ENCODE measurements at regions of chr19 and their contacts with region 1.

Region 1: DNA sequence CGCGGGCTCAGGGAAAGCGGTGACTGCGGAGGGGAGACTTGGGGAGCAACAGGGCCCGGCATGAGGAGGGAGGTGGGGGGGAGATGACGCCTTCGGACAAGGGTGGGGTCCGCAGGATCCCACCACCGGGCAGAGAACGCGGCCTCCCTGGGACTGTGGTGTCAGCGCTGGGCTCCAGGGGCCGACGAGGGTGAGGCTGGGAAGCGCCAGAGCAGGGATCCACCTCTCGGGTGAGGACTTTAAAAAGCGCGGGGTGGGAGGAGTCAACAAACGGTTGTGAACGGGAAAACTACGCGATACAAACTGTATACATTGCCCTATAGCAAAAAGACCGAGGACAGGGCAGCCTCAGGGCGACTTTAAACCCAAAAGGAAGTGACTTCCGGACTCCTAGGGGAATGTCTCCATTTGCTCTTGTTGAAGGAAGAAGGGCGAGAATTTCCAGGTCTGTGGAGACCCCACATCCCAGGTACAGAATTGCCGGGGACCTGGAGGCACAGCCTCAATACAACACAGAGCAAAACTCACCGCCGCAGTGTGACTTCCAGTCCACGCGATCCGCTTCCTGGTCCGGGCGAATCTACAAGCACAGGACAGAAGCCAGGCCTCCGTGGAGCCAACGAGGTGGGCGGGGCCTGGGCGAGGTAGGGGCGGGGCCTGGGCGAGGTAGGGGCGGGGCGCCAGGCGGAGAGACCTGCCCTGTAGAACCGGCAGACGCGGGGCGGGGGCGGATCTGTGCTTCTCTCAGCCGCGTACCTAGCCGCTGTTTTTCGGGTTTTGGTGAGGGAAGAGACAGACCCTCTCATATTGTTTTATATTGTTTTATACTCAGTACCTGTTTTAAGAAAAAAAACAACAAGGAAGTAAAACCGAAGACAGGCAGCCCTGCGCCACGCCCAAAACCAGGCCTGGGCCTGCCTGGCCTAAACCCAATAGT is at the start of gene ZNF888:
- DNase-seq: peak; percentile 96
- ATAC-seq: peak; percentile 100
- H3K4me3 Mint-ChIP-seq: peak within 1 kb of the TSS; percentile 89
- H3K27ac Mint-ChIP-seq: peak within 1 kb of the TSS; percentile 94
- H3K4me1 Mint-ChIP-seq: peaks cover 23% of the 10 kb centered on the region
- H3K27me3 Mint-ChIP-seq: no peaks in the 10 kb centered on the region
- total RNA-seq, gene ZNF888: 5.1 to 5.5 TPM

Region 2: GRCh38 chr19:52248241-52248640 is 674.9 kb before region 1 on chr19:
- CTCF ChIA-PET with region 1: no interaction called
- POLR2A ChIA-PET with region 1: no interaction called
- intact Hi-C with region 1: loop called in 1 of 2 experiments (anchors 5 kb)
- DNase-seq: peak; percentile 82
- ATAC-seq: peak; percentile 93
- H3K4me3 Mint-ChIP-seq: no peak overlapping the region
- H3K27ac Mint-ChIP-seq: no peak overlapping the region
- H3K4me1 Mint-ChIP-seq: no peaks in the 10 kb centered on the region
- H3K27me3 Mint-ChIP-seq: no peaks in the 10 kb centered on the region

Region 3: DNA sequence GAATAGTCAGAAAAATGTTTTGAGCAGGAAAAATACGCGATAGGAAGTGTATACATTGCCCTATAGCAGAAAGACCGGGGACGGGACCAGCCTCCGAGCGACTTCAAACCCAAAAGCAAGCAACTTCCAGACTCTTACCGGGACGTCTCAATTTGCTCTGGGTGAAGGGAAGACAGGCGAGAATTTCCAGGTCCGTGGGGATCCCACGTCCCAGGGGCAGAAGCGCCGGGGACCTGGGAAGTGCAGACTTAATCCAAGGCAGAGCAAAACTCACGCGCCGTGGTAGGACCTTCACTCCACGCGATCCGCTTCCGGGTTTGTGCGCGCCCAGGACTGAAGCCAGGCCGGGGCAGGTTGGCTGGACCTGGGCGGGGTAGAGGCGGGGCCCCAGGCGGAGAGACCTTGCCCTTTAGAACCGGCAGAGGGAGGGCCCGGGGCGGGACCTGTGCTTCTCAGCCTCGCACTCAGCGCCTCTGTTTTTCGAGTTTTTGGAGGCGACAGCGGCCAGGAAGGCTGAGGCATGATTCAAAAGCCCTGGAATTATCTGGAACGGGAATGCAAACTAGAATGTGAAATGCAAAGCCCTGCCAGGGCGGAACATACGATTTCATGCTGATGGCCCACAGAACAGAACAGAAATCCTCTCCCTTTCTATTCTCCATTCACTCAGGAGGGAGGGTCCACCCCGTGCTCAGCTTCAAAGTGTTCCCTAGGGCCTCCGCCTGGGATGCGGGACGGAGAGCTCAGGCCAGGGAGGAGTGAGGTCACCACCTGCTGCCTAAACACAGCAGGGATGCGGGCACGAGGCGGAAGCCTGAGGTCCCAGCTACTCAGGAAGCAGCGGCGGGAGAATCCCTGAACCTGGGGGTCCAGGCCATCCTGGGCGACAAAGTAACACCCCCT is 136.4 kb before region 1 on chr19 and contains the start of gene ZNF600:
- CTCF ChIA-PET with region 1: no interaction called
- POLR2A ChIA-PET with region 1: no interaction called
- intact Hi-C with region 1: loop called in 1 of 2 experiments (anchors 5 kb)
- DNase-seq: peak; percentile 83
- ATAC-seq: peak; percentile 99
- H3K4me3 Mint-ChIP-seq: peak within 1 kb of the TSS; percentile 87
- H3K27ac Mint-ChIP-seq: peak within 1 kb of the TSS; percentile 84
- H3K4me1 Mint-ChIP-seq: peaks cover 23% of the 10 kb centered on the region
- H3K27me3 Mint-ChIP-seq: no peaks in the 10 kb centered on the region
- total RNA-seq, gene ZNF600: 10.6 to 14.3 TPM

Region 4: GRCh38 chr19:52897144-52897935 is 25.8 kb before region 1 on chr19 and contains the start of gene ZNF320:
- CTCF ChIA-PET with region 1: interaction called, 4 read pairs
- POLR2A ChIA-PET with region 1: no interaction called
- intact Hi-C with region 1: loop called (anchors 1 to 2 kb)
- DNase-seq: peak; percentile 98
- ATAC-seq: peak; percentile 100
- H3K4me3 Mint-ChIP-seq: peak within 1 kb of the TSS; percentile 88
- H3K27ac Mint-ChIP-seq: peak within 1 kb of the TSS; percentile 93
- H3K4me1 Mint-ChIP-seq: peaks cover 31% of the 10 kb centered on the region
- H3K27me3 Mint-ChIP-seq: no peaks in the 10 kb centered on the region
- total RNA-seq, gene ZNF320: 10.8 to 12.2 TPM

Region 5: GRCh38 chr19:52974701-52975100 is 51.6 kb after region 1 on chr19:
- CTCF ChIA-PET with region 1: no interaction called
- POLR2A ChIA-PET with region 1: no interaction called
- intact Hi-C with region 1: no loop called
- DNase-seq: no peak
- ATAC-seq: no peak
- H3K4me3 Mint-ChIP-seq: no peak overlapping the region
- H3K27ac Mint-ChIP-seq: no peak overlapping the region
- H3K4me1 Mint-ChIP-seq: no peaks in the 10 kb centered on the region
- H3K27me3 Mint-ChIP-seq: no peaks in the 10 kb centered on the region

Region 6: DNA sequence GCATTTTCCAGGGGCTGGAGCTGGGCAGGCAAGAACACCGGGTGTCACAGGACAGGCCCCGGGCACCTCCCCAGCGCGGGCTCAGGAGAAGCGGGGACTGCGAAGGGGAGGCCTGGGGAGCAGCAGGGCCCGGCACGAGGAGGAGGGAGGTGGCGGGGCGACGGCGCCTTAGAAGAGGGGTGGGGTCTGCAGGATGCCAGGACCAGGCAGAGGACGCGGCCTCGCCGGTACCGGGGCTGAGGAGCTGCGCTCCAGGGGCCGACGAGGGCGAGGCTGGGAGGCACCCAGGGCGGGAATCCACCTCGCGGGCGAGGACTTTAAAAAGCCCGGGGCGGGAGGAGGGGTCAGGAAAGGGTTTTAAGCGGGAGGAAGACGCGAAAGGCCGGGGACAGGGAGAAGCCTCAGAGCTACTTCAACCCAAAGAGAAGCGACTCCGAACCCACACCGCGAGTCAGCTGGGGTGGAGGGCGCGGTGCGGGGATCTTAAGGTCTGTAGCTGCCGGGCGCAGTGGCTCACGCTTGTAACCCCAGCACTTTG is 235.1 kb after region 1 on chr19:
- CTCF ChIA-PET with region 1: no interaction called
- POLR2A ChIA-PET with region 1: no interaction called
- intact Hi-C with region 1: loop called in 1 of 2 experiments (anchors 1 kb)
- DNase-seq: peak; percentile 64
- ATAC-seq: peak; percentile 36
- H3K4me3 Mint-ChIP-seq: peak overlapping the region; percentile 72
- H3K27ac Mint-ChIP-seq: peak overlapping the region; percentile 74
- H3K4me1 Mint-ChIP-seq: peaks cover 14% of the 10 kb centered on the region
- H3K27me3 Mint-ChIP-seq: no peaks in the 10 kb centered on the region